ENCODE measurements at regions of chr1 and their contacts with region 1.

Region 1: GRCh38 chr1:29259802-29260441 is 23.6 kb downstream of the PTPRU start:
- DNase-seq: peak; percentile 85
- ATAC-seq: peak; percentile 85

Region 2: GRCh38 chr1:29332204-29332603 is 72.3 kb after region 1 on chr1:
- intact Hi-C with region 1: loop called (anchors 10 kb)
- DNase-seq: no peak
- ATAC-seq: no peak

Measured in Right ventricle myocardium inferior (tissue), 1 donor.